Caco-2 (cell line): ENCODE measurements at regions of chr11 and their contacts with region 1.

Region 1: DNA sequence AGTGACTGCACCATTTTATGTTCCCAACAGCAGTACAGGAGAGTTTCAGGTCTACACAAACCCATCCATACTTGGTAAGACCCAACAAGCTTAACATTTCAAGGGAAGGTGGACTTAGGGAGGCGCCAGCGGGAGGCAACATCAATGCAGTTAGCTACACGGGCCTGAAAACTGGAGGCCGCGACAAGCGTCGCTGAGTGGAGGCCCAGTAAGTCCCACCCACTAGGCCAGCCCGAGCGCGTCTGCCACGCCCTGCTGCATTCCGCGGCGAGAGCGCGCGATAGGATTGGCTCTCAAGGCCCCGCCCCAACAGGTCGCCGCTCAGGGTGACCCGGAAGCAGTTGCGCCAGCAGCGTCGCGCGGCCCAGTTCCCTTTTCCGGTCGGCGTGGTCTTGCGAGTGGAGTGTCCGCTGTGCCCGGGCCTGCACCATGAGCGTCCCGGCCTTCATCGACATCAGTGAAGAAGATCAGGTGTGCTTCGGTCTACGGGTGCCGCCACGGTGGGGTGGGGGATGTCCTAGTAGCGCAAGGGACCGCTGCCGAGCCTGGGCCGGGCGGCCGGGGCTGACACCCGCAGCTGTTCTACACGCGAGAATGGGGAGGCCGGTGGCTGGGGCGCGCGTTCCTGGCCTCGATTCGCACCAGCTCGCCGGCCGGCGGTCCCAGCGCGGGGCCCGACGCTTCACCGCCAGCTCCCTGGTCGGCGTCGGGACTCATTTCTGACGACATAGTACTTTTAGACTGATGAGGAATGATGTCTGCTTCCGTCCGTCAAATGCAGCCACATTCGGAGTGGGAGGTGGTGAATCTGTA is at the start of gene EIF3M:
- DNase-seq: peak; percentile 97 to 98
- H3K4me3 ChIP-seq: peak within 1 kb of the TSS; percentile 95
- H3K4me3 Mint-ChIP-seq: peak within 1 kb of the TSS; percentile 83
- H3K27ac Mint-ChIP-seq: peak within 1 kb of the TSS; percentile 93
- H3K4me1 ChIP-seq: peaks cover 23% of the 10 kb centered on the region
- H3K4me1 Mint-ChIP-seq: peaks cover 14% of the 10 kb centered on the region
- H3K27me3 ChIP-seq: no peaks in the 10 kb centered on the region
- H3K27me3 Mint-ChIP-seq: no peaks in the 10 kb centered on the region
- CTCF ChIP-seq: no peak
- total RNA-seq, gene EIF3M: 372 and 388 TPM in 2 replicates

Region 2: DNA sequence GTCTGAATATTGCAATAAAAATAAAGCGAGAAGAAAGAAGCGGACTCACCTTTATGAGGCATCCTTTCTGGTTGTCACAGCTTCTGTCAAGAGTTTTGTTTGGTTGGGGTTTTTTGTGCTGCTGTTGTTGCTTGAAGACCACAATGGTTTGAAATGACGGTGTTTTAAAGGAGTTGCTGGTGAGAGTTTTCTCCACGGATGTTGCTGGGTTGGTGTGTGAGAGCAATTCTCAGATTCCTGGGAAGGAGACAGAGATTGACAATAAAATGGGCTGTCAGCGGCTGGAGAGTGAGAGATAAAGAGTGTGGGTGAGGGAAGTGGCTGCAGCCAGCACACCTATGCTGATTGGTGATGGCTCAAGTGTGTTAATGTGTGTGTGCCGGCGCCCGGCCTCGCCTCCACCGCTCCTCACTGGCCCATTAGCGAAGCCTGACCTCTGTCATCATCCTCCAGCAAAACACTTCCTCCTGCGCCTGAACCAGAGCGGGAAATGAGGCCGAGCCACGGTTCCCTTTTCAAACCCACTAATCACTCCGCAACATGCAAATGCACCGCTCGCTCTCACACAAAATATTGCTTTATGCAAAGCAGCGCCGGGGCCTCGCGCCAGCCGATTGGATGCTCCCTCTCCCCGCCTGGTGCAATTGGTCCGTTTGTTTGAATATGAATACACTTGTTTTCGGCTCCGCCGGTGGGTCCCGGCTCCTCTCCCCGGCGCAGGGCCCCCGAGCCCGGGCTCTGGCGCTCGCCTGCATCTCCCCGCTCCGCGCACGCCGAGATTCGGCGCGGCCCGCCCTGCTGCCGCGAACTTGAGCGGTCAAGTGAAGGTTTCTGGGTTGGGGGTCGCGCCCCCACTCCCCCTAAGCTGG is 772.7 kb before region 1 on chr11 and contains the start of gene PAX6:
- CTCF ChIA-PET with region 1: no interaction called
- POLR2A ChIA-PET with region 1: no interaction called
- intact Hi-C with region 1: loop called (anchors 10 kb)
- DNase-seq: peak; percentile 61 to 73
- H3K4me3 ChIP-seq: peak within 1 kb of the TSS; percentile 28
- H3K4me3 Mint-ChIP-seq: peak within 1 kb of the TSS; percentile 88
- H3K27ac Mint-ChIP-seq: no peak within 1 kb of the TSS
- H3K4me1 ChIP-seq: peaks cover 27% of the 10 kb centered on the region
- H3K4me1 Mint-ChIP-seq: peaks cover 21% of the 10 kb centered on the region
- H3K27me3 ChIP-seq: peaks cover 26% of the 10 kb centered on the region
- H3K27me3 Mint-ChIP-seq: peaks cover 48% of the 10 kb centered on the region
- CTCF ChIP-seq: no peak
- total RNA-seq, gene PAX6: 0.43 and 0.74 TPM in 2 replicates

Region 3: GRCh38 chr11:32555091-32555490 is 28.6 kb before region 1 on chr11:
- CTCF ChIA-PET with region 1: no interaction called
- POLR2A ChIA-PET with region 1: no interaction called
- intact Hi-C with region 1: no loop called
- DNase-seq: no peak
- H3K4me3 ChIP-seq: no peak overlapping the region
- H3K4me3 Mint-ChIP-seq: no peak overlapping the region
- H3K27ac Mint-ChIP-seq: no peak overlapping the region
- H3K4me1 ChIP-seq: no peaks in the 10 kb centered on the region
- H3K4me1 Mint-ChIP-seq: no peaks in the 10 kb centered on the region
- H3K27me3 ChIP-seq: no peaks in the 10 kb centered on the region
- H3K27me3 Mint-ChIP-seq: no peaks in the 10 kb centered on the region
- CTCF ChIP-seq: no peak